ENCODE measurements at regions of chr6 and their contacts with region 1.

Region 1: GRCh38 chr6:10478187-10479040 is 42.7 kb upstream of the GCNT2 start:
- DNase-seq: peak; percentile 2
- H3K4me3 ChIP-seq: no peak overlapping the region
- H3K27ac ChIP-seq: no peak overlapping the region
- H3K27me3 ChIP-seq: peaks cover 3% of the 10 kb centered on the region
- CTCF ChIP-seq: peak; percentile 58

Region 2: GRCh38 chr6:10465629-10466504 is 12.5 kb before region 1 on chr6:
- CTCF ChIA-PET with region 1: interaction called, 16 read pairs
- POLR2A ChIA-PET with region 1: no interaction called
- DNase-seq: no peak
- H3K4me3 ChIP-seq: no peak overlapping the region
- H3K27ac ChIP-seq: no peak overlapping the region
- H3K27me3 ChIP-seq: peaks cover 5% of the 10 kb centered on the region
- CTCF ChIP-seq: peak; percentile 52

Region 3: GRCh38 chr6:10609995-10610688 is 131.7 kb after region 1 on chr6:
- CTCF ChIA-PET with region 1: interaction called, 10 read pairs
- POLR2A ChIA-PET with region 1: no interaction called
- DNase-seq: peak; percentile 65
- H3K4me3 ChIP-seq: no peak overlapping the region
- H3K27ac ChIP-seq: no peak overlapping the region
- H3K27me3 ChIP-seq: no peaks in the 10 kb centered on the region
- CTCF ChIP-seq: no peak

Region 4: GRCh38 chr6:10759312-10759839 is 281.0 kb after region 1 on chr6:
- CTCF ChIA-PET with region 1: interaction called, 15 read pairs
- POLR2A ChIA-PET with region 1: no interaction called
- DNase-seq: peak; percentile 86
- H3K4me3 ChIP-seq: no peak overlapping the region
- H3K27ac ChIP-seq: peak overlapping the region; percentile 67
- H3K27me3 ChIP-seq: no peaks in the 10 kb centered on the region
- CTCF ChIP-seq: peak; percentile 73

Region 5: GRCh38 chr6:10800829-10801535 is 322.6 kb after region 1 on chr6:
- CTCF ChIA-PET with region 1: interaction called, 71 read pairs
- POLR2A ChIA-PET with region 1: no interaction called
- DNase-seq: peak; percentile 36
- H3K4me3 ChIP-seq: no peak overlapping the region
- H3K27ac ChIP-seq: no peak overlapping the region
- H3K27me3 ChIP-seq: no peaks in the 10 kb centered on the region
- CTCF ChIP-seq: peak; percentile 100